ENCODE measurements at regions of chr22 and their contacts with region 1.

Region 1: DNA sequence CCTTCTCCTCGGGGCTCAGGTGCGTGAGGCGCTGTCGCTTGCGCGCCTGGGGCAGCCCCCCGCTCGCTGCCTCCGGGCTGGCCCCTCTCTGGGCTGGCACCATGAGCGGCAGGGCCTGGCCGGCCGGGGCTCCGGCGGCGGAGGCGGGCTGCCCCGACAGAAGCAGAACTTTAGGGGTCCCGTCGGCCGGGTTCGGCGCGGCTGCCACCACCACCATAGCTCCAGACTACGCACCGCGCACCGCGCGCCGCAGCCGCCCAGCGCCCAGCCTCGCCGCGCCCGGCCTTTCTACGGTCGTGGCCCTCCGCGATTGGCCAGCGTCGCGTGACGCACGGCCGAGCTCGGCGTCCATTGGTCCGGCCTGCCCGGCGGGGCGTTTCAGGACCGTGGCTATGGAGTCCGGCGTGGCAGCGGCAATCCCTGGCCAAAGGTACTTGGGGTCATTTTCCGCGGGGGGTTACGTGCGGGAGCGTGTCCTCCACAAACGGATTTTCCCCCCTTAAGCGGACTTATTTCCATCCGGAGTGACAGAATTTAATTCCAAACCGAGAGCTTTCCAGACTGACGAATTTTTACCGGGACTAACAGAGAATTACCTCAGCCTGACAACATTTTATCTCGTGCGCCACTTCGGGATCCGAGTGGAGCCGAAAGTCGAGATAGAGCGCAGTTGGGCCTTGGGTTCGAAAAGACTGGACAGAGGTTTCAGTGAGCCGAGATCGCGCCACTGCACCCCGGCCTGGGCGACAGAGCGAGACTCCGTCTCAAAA is at the start of gene XBP1:
- DNase-seq: peak; percentile 92
- H3K4me3 Mint-ChIP-seq: peak within 1 kb of the TSS; percentile 88
- H3K27ac Mint-ChIP-seq: peak within 1 kb of the TSS; percentile 94
- H3K4me1 Mint-ChIP-seq: peaks cover 46% of the 10 kb centered on the region
- H3K27me3 Mint-ChIP-seq: no peaks in the 10 kb centered on the region
- total RNA-seq, gene XBP1: 263 to 266 TPM

Region 2: GRCh38 chr22:28741758-28742561 is 58.5 kb before region 1 on chr22 and contains the starts of genes CHEK2 and HSCB:
- CTCF ChIA-PET with region 1: interaction called, 3 read pairs
- POLR2A ChIA-PET with region 1: interaction called, 15 read pairs
- DNase-seq: peak; percentile 98
- H3K4me3 Mint-ChIP-seq: peak within 1 kb of the TSS; percentile 94
- H3K27ac Mint-ChIP-seq: peak within 1 kb of the TSS; percentile 89
- H3K4me1 Mint-ChIP-seq: peaks cover 51% of the 10 kb centered on the region
- H3K27me3 Mint-ChIP-seq: no peaks in the 10 kb centered on the region
- total RNA-seq, gene CHEK2: 38.7 to 39.8 TPM
- total RNA-seq, gene HSCB: 14.4 to 16.1 TPM

Region 3: GRCh38 chr22:28783786-28784671 is 16.5 kb before region 1 on chr22:
- CTCF ChIA-PET with region 1: interaction called, 4 read pairs
- POLR2A ChIA-PET with region 1: interaction called, 44 read pairs
- DNase-seq: no peak
- H3K4me3 Mint-ChIP-seq: no peak overlapping the region
- H3K27ac Mint-ChIP-seq: no peak overlapping the region
- H3K4me1 Mint-ChIP-seq: peaks cover 16% of the 10 kb centered on the region
- H3K27me3 Mint-ChIP-seq: no peaks in the 10 kb centered on the region

Region 4: DNA sequence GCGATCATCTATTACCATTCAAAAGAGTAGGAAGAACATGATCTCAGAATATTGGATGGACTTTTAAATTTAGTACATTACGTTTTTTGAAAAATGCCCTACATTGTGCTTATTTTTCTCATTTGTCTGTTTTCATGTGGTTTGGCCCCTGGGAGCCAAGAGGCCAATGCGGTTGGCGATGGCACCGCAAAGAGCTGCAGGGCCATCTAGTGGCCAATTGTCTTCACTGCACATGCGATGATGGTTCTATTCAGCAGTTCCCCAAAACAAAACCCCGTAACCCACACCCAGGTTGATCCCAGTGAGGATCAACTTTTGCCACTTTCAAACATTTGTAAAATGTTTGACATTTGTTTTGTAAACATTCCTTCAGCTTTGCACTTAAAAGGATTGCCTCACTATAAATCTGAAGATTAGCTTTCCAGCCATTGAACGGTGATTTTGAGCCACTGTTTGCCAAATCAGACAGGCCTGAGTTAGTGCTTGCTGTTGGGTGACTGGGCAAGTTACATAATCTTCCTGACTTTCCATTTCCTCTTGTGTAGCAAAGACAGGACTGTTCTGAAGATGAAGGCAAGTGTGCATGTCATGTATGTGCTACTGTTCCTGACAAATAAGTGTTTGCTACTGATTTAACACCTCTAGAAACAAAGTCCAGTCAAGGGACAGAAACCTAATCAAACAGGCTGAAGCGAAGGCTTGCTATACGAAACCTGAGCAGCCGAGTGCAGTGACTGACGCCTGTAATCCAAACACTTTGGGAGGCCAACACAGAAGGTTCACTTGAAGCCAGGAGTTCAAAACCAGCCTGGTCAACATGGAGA is 29.1 kb after region 1 on chr22:
- CTCF ChIA-PET with region 1: interaction called, 54 read pairs
- POLR2A ChIA-PET with region 1: interaction called, 348 read pairs
- DNase-seq: peak; percentile 84
- H3K4me3 Mint-ChIP-seq: no peak overlapping the region
- H3K27ac Mint-ChIP-seq: no peak overlapping the region
- H3K4me1 Mint-ChIP-seq: peaks cover 40% of the 10 kb centered on the region
- H3K27me3 Mint-ChIP-seq: no peaks in the 10 kb centered on the region

Measured in activated CD4-positive, alpha-beta memory T cell treated with anti-CD3 and anti-CD28 coated beads, Interleukin-2, amount 10 ng/mL, durations not matched to agents 7 days and 5 days (primary cell).